ENCODE measurements at regions of chr4 and their contacts with region 1.

Region 1: DNA sequence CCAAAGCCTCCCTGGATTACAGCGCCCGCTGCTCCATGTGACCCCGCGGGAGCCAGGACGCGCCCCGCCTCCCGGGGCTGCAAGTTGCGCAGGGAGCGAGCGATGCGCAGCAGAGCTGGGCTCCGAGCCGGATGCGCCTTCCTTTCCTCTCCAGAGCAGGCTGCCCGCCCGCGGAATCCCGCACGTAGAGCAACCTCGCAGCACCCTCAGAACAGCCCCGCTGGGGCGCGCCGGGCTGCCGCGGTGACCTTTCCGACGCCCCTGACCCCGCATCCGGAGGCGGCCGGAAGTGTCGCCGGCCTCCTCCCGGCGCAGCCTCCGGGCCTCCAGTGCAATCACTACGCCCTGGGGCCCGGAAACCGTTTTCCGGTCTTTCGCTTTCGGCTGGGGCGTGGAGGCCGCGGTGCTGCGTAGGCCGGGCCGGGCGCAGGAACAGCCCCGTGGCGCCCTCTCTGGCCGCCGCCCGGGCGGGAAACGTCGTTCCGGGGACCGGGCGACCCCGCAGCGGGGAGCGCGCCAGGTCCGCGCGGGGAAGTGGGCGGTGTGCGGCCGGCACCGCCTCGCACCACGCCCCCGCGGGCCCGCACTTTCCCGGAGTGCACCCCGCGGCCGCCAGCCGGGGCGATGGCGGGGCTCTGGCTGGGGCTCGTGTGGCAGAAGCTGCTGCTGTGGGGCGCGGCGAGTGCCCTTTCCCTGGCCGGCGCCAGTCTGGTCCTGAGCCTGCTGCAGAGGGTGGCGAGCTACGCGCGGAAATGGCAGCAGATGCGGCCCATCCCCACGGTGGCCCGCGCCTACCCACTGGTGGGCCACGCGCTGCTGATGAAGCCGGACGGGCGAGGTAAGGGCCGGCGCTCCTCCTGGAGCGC is at the start of gene CYP4V2:
- DNase-seq: peak; percentile 62

Region 2: DNA sequence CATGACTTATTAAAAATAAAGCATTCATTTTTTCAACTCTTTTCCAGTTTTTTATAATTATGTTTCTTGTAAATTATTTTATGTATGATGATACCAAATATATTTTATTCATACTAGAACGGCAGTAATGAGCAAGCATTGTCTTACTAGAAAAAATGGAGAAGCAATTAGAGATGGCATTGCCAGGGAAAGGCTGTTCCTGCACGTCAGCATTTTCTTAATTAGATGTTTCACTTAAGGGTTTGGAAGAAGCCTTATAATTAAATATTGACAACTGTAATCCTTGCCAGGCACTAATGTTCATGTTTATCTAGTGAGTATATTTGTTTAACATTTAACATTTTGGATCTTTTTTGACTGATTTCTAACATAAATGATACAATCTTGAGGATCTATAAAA is 70.4 kb before region 1 on chr4:
- CTCF ChIA-PET with region 1: no interaction called
- POLR2A ChIA-PET with region 1: no interaction called
- DNase-seq: no peak

Region 3: GRCh38 chr4:186201535-186202230 is 10.2 kb after region 1 on chr4:
- CTCF ChIA-PET with region 1: interaction called, 7 read pairs
- POLR2A ChIA-PET with region 1: interaction called, 35 read pairs
- DNase-seq: peak; percentile 56

Measured in HEK293T (cell line).